Activated CD8-positive, alpha-beta T cell treated with anti-CD3 and anti-CD28 coated beads, Interleukin-2, amount 10 ng/mL, durations not matched to agents 7 days and 5 days (primary cell): ENCODE measurements at regions of chr17 and their contacts with region 1.

Region 1: DNA sequence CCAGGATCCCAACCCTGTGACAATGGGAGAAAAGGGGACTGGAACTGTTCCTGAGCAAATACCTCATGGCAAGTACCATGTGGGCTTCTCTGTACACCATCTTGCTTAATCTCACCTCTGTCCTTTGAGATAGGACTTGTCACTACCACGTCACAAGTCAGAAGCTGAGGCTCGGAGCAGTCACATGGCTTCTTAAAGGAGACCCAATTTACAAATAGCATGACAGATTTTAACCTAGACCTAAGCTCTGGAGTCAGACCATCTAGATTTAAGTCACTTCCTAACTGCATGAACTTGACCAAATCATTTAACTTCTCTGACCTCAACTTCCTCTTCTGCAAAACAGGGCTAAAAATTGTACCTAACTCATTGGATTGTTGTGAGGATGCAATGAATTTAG is 36.0 kb upstream of the CCL1 start:
- DNase-seq: no peak
- ATAC-seq: peak; percentile 42
- H3K4me3 Mint-ChIP-seq: no peak overlapping the region
- H3K27ac Mint-ChIP-seq: peak overlapping the region; percentile 47
- H3K4me1 Mint-ChIP-seq: peaks cover 37% of the 10 kb centered on the region
- H3K27me3 Mint-ChIP-seq: peaks cover 26% of the 10 kb centered on the region

Region 2: GRCh38 chr17:34199932-34200534 is 199.0 kb before region 1 on chr17:
- CTCF ChIA-PET with region 1: interaction called, 10 read pairs
- POLR2A ChIA-PET with region 1: no interaction called
- DNase-seq: peak; percentile 81
- ATAC-seq: peak; percentile 84
- H3K4me3 Mint-ChIP-seq: no peak overlapping the region
- H3K27ac Mint-ChIP-seq: no peak overlapping the region
- H3K4me1 Mint-ChIP-seq: peaks cover 4% of the 10 kb centered on the region
- H3K27me3 Mint-ChIP-seq: peaks cover 24% of the 10 kb centered on the region

Region 3: GRCh38 chr17:34378664-34379101 is 20.3 kb before region 1 on chr17:
- CTCF ChIA-PET with region 1: interaction called, 15 read pairs
- POLR2A ChIA-PET with region 1: interaction called, 4 read pairs
- DNase-seq: peak; percentile 57
- ATAC-seq: peak; percentile 63
- H3K4me3 Mint-ChIP-seq: peak overlapping the region; percentile 46
- H3K27ac Mint-ChIP-seq: peak overlapping the region; percentile 25
- H3K4me1 Mint-ChIP-seq: peaks cover 38% of the 10 kb centered on the region
- H3K27me3 Mint-ChIP-seq: peaks cover 17% of the 10 kb centered on the region

Region 4: GRCh38 chr17:34386697-34387550 is 12.1 kb before region 1 on chr17:
- CTCF ChIA-PET with region 1: interaction called, 33 read pairs
- POLR2A ChIA-PET with region 1: interaction called, 5 read pairs
- DNase-seq: no peak
- ATAC-seq: no peak
- H3K4me3 Mint-ChIP-seq: no peak overlapping the region
- H3K27ac Mint-ChIP-seq: no peak overlapping the region
- H3K4me1 Mint-ChIP-seq: peaks cover 56% of the 10 kb centered on the region
- H3K27me3 Mint-ChIP-seq: peaks cover 16% of the 10 kb centered on the region

Region 5: GRCh38 chr17:34420254-34420766 is 21.3 kb after region 1 on chr17:
- CTCF ChIA-PET with region 1: interaction called, 13 read pairs
- POLR2A ChIA-PET with region 1: no interaction called
- DNase-seq: peak; percentile 70
- ATAC-seq: peak; percentile 57
- H3K4me3 Mint-ChIP-seq: no peak overlapping the region
- H3K27ac Mint-ChIP-seq: no peak overlapping the region
- H3K4me1 Mint-ChIP-seq: no peaks in the 10 kb centered on the region
- H3K27me3 Mint-ChIP-seq: peaks cover 33% of the 10 kb centered on the region